ENCODE measurements at regions of chr9 and their contacts with region 1.

Region 1: GRCh38 chr9:133144137-133144903 is 19.4 kb downstream of the GBGT1 start:
- H3K4me3 ChIP-seq: peak overlapping the region; percentile 23
- H3K27ac ChIP-seq: no peak overlapping the region; the same call in 1 of the 2 replicates
- H3K4me1 ChIP-seq: peaks cover 3% of the 10 kb centered on the region; the same call in 1 of the 2 replicates
- CTCF ChIP-seq: peak; percentile 99

Region 2: DNA sequence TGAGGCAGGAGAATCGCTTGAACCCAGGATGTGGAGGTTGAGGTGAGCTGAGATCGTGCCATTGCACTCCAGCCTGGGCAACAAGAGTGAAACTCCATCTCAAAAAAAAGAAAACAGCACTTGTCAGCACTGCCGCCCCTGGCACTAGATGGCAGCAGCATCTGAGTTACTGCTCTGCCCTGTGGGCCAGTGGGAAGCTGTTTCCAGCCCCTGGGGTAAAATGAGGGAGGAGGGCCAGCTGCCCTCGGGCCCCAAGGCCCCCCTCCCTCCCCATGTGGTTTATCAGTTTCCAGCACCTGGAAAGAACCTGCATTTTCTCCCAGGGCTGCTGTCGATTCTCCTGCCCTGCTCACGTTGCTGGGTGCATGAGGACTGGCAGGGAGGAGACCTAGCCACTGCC is 95.8 kb before region 1 on chr9:
- CTCF ChIA-PET with region 1: interaction called, 117 read pairs
- POLR2A ChIA-PET with region 1: no interaction called
- H3K4me3 ChIP-seq: no peak overlapping the region
- H3K27ac ChIP-seq: no peak overlapping the region
- H3K4me1 ChIP-seq: no peaks in the 10 kb centered on the region
- CTCF ChIP-seq: peak; percentile 73

Region 3: GRCh38 chr9:133075925-133076630 is 68.2 kb before region 1 on chr9:
- CTCF ChIA-PET with region 1: interaction called, 30 read pairs
- POLR2A ChIA-PET with region 1: interaction called, 4 read pairs
- H3K4me3 ChIP-seq: no peak overlapping the region
- H3K27ac ChIP-seq: no peak overlapping the region
- H3K4me1 ChIP-seq: no peaks in the 10 kb centered on the region
- CTCF ChIP-seq: no peak

Region 4: GRCh38 chr9:133094842-133095393 is 49.4 kb before region 1 on chr9:
- CTCF ChIA-PET with region 1: interaction called, 342 read pairs
- POLR2A ChIA-PET with region 1: no interaction called
- H3K4me3 ChIP-seq: no peak overlapping the region
- H3K27ac ChIP-seq: no peak overlapping the region
- H3K4me1 ChIP-seq: no peaks in the 10 kb centered on the region
- CTCF ChIP-seq: no peak

Region 5: DNA sequence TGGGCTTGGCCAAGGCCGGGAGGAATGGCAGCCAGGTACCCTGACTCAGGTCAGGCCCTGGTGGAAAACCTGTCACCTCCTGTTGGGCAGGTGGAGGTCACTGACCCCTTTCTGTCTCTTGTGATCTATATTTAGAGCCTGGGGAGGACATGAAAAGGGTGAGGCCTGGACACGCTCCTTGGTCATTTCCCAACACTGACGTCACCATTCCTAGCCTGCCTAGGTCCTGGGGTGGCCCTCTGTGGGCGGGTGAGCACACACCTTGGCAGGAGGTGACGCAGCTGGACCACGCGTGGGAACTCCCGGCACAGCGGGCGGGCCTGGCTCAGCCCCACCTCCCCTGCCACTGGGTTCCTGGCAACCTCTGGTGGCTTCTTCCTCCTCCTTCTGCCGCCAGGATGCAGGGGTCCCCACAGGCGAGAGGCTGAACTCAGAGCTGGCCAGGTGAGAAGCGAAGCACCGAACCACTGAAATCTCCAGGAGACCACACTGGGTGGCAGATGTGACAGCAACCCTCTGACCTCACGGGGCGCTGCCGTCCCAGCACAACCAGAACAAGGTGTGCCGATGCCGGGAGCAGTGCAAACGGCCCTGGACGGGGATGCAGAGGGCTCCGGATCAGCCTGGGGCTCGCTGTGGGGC is 16.9 kb before region 1 on chr9:
- CTCF ChIA-PET with region 1: interaction called, 131 read pairs
- POLR2A ChIA-PET with region 1: interaction called, 5 read pairs
- H3K4me3 ChIP-seq: no peak overlapping the region
- H3K27ac ChIP-seq: no peak overlapping the region
- H3K4me1 ChIP-seq: 0 out of 2 replicates have a peak, but pooled peaks cover 4% of the 10 kb centered on the region
- CTCF ChIP-seq: no peak